ENCODE measurements at regions of chr10 and their contacts with region 1.

Region 1: DNA sequence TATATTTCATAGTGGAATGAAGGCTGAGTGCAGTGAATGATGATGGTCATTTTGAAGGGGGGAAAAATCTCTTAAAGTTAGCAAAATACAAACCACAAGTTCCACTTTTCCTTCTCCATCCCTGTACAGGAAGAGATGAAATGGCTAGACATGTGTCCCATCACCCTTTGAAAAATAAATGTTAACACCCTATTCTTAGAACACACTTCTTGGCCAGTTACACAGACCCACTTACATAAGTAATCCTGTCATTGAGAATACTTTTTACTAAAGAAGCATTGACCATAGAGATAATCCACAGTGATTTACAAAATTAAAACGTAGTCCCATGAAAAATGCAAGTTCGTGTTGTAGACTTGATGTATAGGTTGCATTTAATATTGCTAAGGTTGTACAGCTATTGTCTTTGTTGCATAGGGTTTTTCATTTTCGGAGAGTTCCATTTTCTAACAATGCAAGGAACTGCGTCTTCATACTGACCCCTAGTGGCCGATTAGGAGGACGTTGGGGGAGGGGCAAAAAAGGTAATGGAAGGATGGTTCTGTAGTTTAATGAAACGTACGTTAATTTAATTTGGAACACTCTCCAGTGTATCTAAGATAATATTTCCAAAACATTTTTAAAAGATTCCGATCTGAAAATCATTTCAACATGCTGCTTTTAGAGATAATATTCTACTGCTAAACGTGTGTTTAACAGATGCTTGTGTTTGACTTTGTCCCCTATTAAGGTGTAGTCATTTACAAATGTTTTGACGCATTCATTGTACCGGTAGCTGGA is 60.9 kb downstream of the ARMC3 start:
- DNase-seq: peak; percentile 74
- H3K4me3 Mint-ChIP-seq: no peak overlapping the region
- H3K27ac Mint-ChIP-seq: no peak overlapping the region
- H3K4me1 Mint-ChIP-seq: peaks cover 18% of the 10 kb centered on the region
- H3K27me3 Mint-ChIP-seq: peaks cover 2% of the 10 kb centered on the region

Region 2: DNA sequence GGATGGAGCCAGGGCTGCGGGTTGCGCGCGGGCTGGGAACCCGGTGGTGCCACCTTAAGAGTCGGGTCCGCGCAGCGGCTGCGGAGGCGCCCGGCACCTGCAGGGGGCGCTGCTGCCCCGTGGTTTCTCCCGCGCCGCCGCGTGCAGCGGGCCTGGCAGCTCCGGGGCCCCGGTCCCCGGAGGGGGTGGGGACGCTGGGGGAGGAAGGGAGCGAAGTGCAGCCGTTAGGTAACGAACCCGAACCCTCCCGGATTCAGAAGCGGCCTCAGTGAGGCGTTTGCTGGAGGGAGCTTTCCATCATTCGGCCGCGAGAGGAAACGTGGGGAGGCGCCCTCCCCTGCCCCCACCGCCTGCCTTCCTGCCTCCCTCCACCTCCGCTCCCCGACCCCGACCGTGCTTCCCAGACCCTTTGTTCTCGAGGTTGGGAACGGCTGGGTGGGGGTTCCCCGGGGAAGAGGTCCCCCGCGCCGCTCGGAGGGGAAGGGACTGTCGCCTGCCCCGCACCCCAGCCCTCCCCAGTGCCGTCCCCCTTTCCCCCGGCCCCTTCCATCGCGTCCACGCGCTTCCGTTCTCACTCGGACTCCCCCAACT is 1492.9 kb before region 1 on chr10:
- CTCF ChIA-PET with region 1: interaction called, 8 read pairs
- POLR2A ChIA-PET with region 1: no interaction called
- intact Hi-C with region 1: loop called (anchors 2 kb)
- DNase-seq: peak; percentile 90
- H3K4me3 Mint-ChIP-seq: peak overlapping the region; percentile 71
- H3K27ac Mint-ChIP-seq: no peak overlapping the region
- H3K4me1 Mint-ChIP-seq: peaks cover 12% of the 10 kb centered on the region
- H3K27me3 Mint-ChIP-seq: peaks cover 48% of the 10 kb centered on the region

Region 3: GRCh38 chr10:22003079-22003913 is 985.5 kb before region 1 on chr10 and contains the start of gene DNAJC1:
- CTCF ChIA-PET with region 1: interaction called, 5 read pairs
- POLR2A ChIA-PET with region 1: no interaction called
- intact Hi-C with region 1: loop called (anchors 5 kb)
- DNase-seq: peak; percentile 99
- H3K4me3 Mint-ChIP-seq: peak within 1 kb of the TSS; percentile 87
- H3K27ac Mint-ChIP-seq: peak within 1 kb of the TSS; percentile 81
- H3K4me1 Mint-ChIP-seq: peaks cover 37% of the 10 kb centered on the region
- H3K27me3 Mint-ChIP-seq: peaks cover 6% of the 10 kb centered on the region
- total RNA-seq, gene DNAJC1: 24.0 to 24.8 TPM

Region 4: DNA sequence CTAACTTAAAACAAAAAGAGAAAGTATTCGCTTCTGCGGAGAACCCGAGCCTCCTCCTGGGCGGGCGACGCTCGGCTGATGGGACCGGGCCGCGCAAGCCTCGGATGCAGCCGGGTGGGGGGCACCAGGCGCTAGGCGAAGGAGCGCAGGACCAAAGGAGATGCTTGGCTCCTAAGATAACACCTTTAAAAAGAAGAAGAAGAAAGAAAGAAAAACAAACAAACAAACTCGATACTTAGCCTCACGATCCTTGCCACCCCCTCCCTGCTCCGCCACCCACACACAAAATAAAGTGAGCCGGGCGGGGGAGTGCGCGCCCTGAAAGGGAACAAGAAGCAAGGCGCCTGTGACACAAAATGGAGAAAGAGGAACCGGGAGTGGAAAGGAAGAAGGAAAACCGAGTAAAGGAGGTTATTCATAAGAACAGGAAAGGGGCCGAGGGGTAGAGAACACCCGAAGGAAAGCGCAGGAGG is 737.0 kb before region 1 on chr10:
- CTCF ChIA-PET with region 1: no interaction called
- POLR2A ChIA-PET with region 1: no interaction called
- intact Hi-C with region 1: loop called (anchors 2 kb)
- DNase-seq: peak; percentile 83
- H3K4me3 Mint-ChIP-seq: peak overlapping the region; percentile 83
- H3K27ac Mint-ChIP-seq: peak overlapping the region; percentile 97
- H3K4me1 Mint-ChIP-seq: peaks cover 42% of the 10 kb centered on the region
- H3K27me3 Mint-ChIP-seq: peaks cover 3% of the 10 kb centered on the region

Region 5: GRCh38 chr10:22316285-22317120 is 672.3 kb before region 1 on chr10 and contains the start of gene COMMD3:
- CTCF ChIA-PET with region 1: interaction called, 4 read pairs
- POLR2A ChIA-PET with region 1: no interaction called
- intact Hi-C with region 1: loop called (anchors 5 kb)
- DNase-seq: peak; percentile 87
- H3K4me3 Mint-ChIP-seq: peak within 1 kb of the TSS; percentile 92
- H3K27ac Mint-ChIP-seq: peak within 1 kb of the TSS; percentile 92
- H3K4me1 Mint-ChIP-seq: peaks cover 37% of the 10 kb centered on the region
- H3K27me3 Mint-ChIP-seq: peaks cover 4% of the 10 kb centered on the region
- total RNA-seq, gene COMMD3: 84.6 to 91.4 TPM

Region 6: GRCh38 chr10:22550732-22551131 is 438.0 kb before region 1 on chr10:
- CTCF ChIA-PET with region 1: interaction called, 21 read pairs
- POLR2A ChIA-PET with region 1: no interaction called
- intact Hi-C with region 1: loop called (anchors 1 kb)
- DNase-seq: peak; percentile 74
- H3K4me3 Mint-ChIP-seq: no peak overlapping the region
- H3K27ac Mint-ChIP-seq: peak overlapping the region; percentile 5
- H3K4me1 Mint-ChIP-seq: peaks cover 17% of the 10 kb centered on the region
- H3K27me3 Mint-ChIP-seq: no peaks in the 10 kb centered on the region

Region 7: GRCh38 chr10:22648547-22648961 is 340.2 kb before region 1 on chr10:
- CTCF ChIA-PET with region 1: no interaction called
- POLR2A ChIA-PET with region 1: no interaction called
- intact Hi-C with region 1: loop called (anchors 5 kb)
- DNase-seq: no peak
- H3K4me3 Mint-ChIP-seq: peak overlapping the region; percentile 74
- H3K27ac Mint-ChIP-seq: peak overlapping the region; percentile 95
- H3K4me1 Mint-ChIP-seq: peaks cover 93% of the 10 kb centered on the region
- H3K27me3 Mint-ChIP-seq: no peaks in the 10 kb centered on the region

Region 8: GRCh38 chr10:22805283-22805682 is 183.5 kb before region 1 on chr10:
- CTCF ChIA-PET with region 1: no interaction called
- POLR2A ChIA-PET with region 1: no interaction called
- intact Hi-C with region 1: no loop called
- DNase-seq: no peak
- H3K4me3 Mint-ChIP-seq: no peak overlapping the region
- H3K27ac Mint-ChIP-seq: no peak overlapping the region
- H3K4me1 Mint-ChIP-seq: peaks cover 2% of the 10 kb centered on the region
- H3K27me3 Mint-ChIP-seq: no peaks in the 10 kb centered on the region

Region 9: GRCh38 chr10:22816298-22816653 is 172.5 kb before region 1 on chr10:
- CTCF ChIA-PET with region 1: no interaction called
- POLR2A ChIA-PET with region 1: no interaction called
- intact Hi-C with region 1: no loop called
- DNase-seq: peak; percentile 21
- H3K4me3 Mint-ChIP-seq: no peak overlapping the region
- H3K27ac Mint-ChIP-seq: no peak overlapping the region
- H3K4me1 Mint-ChIP-seq: peaks cover 15% of the 10 kb centered on the region
- H3K27me3 Mint-ChIP-seq: no peaks in the 10 kb centered on the region

Region 10: GRCh38 chr10:23171223-23171876 is 182.6 kb after region 1 on chr10:
- CTCF ChIA-PET with region 1: no interaction called
- POLR2A ChIA-PET with region 1: no interaction called
- intact Hi-C with region 1: no loop called
- DNase-seq: no peak
- H3K4me3 Mint-ChIP-seq: no peak overlapping the region
- H3K27ac Mint-ChIP-seq: no peak overlapping the region
- H3K4me1 Mint-ChIP-seq: peaks cover 4% of the 10 kb centered on the region
- H3K27me3 Mint-ChIP-seq: peaks cover 54% of the 10 kb centered on the region

Measured in activated CD4-positive, alpha-beta memory T cell treated with anti-CD3 and anti-CD28 coated beads for 36 hours (primary cell).